ENCODE measurements at regions of chr1 and their contacts with region 1.

Region 1: DNA sequence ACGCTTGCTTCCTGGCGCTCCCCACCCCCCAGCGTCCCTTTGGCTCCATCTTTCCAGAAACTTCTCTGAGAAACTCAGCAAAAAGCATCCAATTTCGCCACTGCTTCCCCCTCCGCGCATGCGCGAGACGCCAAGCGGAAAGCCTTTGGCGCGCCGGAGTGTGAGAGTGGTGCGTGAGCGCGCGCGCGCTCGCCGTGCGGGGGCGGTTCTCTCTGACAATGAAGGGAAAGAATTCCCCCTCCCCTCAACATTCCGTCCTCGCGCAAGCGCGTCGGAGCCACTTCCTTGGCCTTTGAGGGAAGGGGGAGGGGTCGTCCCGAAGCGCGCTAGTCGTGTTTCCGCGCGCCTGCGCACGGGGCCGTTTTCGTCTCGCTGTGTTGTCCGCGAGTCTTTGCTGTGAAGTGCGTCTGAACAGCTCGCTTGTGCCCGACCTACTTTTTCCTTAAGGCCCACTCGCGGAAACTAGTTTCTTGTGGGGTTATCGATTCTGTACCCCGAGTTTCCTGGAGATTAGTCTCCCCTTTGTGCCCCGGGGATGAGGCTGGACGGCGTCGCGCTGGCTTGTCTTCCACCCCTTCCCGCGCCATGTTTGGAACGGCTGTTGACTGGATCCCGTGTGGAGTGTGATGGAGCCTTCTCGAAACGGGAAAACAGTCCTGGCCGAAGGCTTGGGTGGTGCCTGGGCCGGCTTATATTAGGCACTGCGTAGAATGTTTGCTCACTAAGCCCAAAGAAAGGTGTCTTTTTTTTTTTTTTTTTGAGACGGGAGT is 11.6 kb upstream of the SPEN start:
- DNase-seq: peak; percentile 96 to 99 (median 98)
- ATAC-seq: peak; percentile 77
- H3K4me3 ChIP-seq: peak overlapping the region; percentile 100
- H3K4me3 Mint-ChIP-seq: peak overlapping the region; percentile 88 to 100 (median 96)
- H3K27ac ChIP-seq: peak overlapping the region; percentile 98
- H3K27ac Mint-ChIP-seq: peak overlapping the region; percentile 98 to 100 (median 99)
- H3K4me1 ChIP-seq: peaks cover 12 to 16% of the 10 kb centered on the region in 2 donors
- H3K4me1 Mint-ChIP-seq: peaks cover 5 to 35% (median 24%) of the 10 kb centered on the region in 7 donors
- H3K27me3 ChIP-seq: no peaks in the 10 kb centered on the region
- H3K27me3 Mint-ChIP-seq: peaks cover 0 to 3% (median 0%) of the 10 kb centered on the region in 5 donors

Region 2: DNA sequence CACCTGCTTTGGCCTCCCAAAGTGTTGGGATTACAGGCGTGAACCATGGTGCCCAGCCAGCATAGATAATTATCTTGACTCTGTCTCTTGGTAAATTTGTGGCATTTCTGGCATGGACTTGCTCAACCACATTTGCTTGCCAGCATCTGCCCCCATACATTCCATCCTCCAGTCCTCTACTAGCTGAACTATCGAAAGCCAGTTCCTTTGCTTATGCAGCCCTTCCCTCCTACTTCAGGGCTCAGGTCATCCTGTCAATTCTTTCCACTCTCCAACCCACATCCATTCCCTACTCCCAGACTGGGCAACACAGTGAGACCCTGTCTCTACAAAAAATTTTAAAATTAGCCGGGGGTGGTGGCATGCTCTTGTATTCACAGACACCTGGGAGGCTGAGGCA is 15.4 kb before region 1 on chr1:
- CTCF ChIA-PET with region 1: interaction called, 14 read pairs
- POLR2A ChIA-PET with region 1: interaction called, 39 read pairs
- intact Hi-C with region 1: loop called (anchors 1 kb)
- DNase-seq: no peak
- ATAC-seq: no peak
- H3K4me3 ChIP-seq: no peak overlapping the region
- H3K4me3 Mint-ChIP-seq: no peak overlapping the region
- H3K27ac ChIP-seq: no peak overlapping the region
- H3K27ac Mint-ChIP-seq: no peak overlapping the region
- H3K4me1 ChIP-seq: no peaks in the 10 kb centered on the region
- H3K4me1 Mint-ChIP-seq: peaks cover 3 to 14% (median 4%) of the 10 kb centered on the region in 7 donors
- H3K27me3 ChIP-seq: no peaks in the 10 kb centered on the region
- H3K27me3 Mint-ChIP-seq: no peaks in the 10 kb centered on the region

Region 3: GRCh38 chr1:15847100-15847892 is 11.4 kb after region 1 on chr1 and contains the start of gene SPEN:
- CTCF ChIA-PET with region 1: interaction called, 9 read pairs
- POLR2A ChIA-PET with region 1: interaction called, 227 read pairs
- intact Hi-C with region 1: loop called (anchors 1 kb)
- DNase-seq: peak; percentile 97 to 99 (median 99)
- ATAC-seq: peak; percentile 91
- H3K4me3 ChIP-seq: peak within 1 kb of the TSS; percentile 74
- H3K4me3 Mint-ChIP-seq: peak within 1 kb of the TSS; percentile 93 to 99 (median 98)
- H3K27ac ChIP-seq: peak within 1 kb of the TSS; percentile 90
- H3K27ac Mint-ChIP-seq: peak within 1 kb of the TSS; percentile 93 to 98 (median 97)
- H3K4me1 ChIP-seq: peaks cover 20 to 26% of the 10 kb centered on the region in 2 donors
- H3K4me1 Mint-ChIP-seq: peaks cover 21 to 64% (median 44%) of the 10 kb centered on the region in 7 donors
- H3K27me3 ChIP-seq: no peaks in the 10 kb centered on the region
- H3K27me3 Mint-ChIP-seq: no peaks in the 10 kb centered on the region
- total RNA-seq, gene SPEN: 72.1 to 92.1 (median 82.9) TPM

Region 4: GRCh38 chr1:15975805-15976680 is 140.1 kb after region 1 on chr1 and contains the start of gene ZBTB17:
- CTCF ChIA-PET with region 1: interaction called, 5 read pairs
- POLR2A ChIA-PET with region 1: interaction called, 20 read pairs
- intact Hi-C with region 1: loop called (anchors 1 kb)
- DNase-seq: peak; percentile 90 to 95 (median 94)
- ATAC-seq: peak; percentile 96
- H3K4me3 ChIP-seq: peak within 1 kb of the TSS; percentile 76
- H3K4me3 Mint-ChIP-seq: peak within 1 kb of the TSS; percentile 82 to 94 (median 90)
- H3K27ac ChIP-seq: peak within 1 kb of the TSS; percentile 83
- H3K27ac Mint-ChIP-seq: peak within 1 kb of the TSS; percentile 82 to 95 (median 92)
- H3K4me1 ChIP-seq: peaks cover 12 to 17% of the 10 kb centered on the region in 2 donors
- H3K4me1 Mint-ChIP-seq: peaks cover 21 to 46% (median 38%) of the 10 kb centered on the region in 7 donors
- H3K27me3 ChIP-seq: no peaks in the 10 kb centered on the region
- H3K27me3 Mint-ChIP-seq: no peaks in the 10 kb centered on the region
- total RNA-seq, gene ZBTB17: 47.3 to 85.1 (median 65.0) TPM

Region 5: DNA sequence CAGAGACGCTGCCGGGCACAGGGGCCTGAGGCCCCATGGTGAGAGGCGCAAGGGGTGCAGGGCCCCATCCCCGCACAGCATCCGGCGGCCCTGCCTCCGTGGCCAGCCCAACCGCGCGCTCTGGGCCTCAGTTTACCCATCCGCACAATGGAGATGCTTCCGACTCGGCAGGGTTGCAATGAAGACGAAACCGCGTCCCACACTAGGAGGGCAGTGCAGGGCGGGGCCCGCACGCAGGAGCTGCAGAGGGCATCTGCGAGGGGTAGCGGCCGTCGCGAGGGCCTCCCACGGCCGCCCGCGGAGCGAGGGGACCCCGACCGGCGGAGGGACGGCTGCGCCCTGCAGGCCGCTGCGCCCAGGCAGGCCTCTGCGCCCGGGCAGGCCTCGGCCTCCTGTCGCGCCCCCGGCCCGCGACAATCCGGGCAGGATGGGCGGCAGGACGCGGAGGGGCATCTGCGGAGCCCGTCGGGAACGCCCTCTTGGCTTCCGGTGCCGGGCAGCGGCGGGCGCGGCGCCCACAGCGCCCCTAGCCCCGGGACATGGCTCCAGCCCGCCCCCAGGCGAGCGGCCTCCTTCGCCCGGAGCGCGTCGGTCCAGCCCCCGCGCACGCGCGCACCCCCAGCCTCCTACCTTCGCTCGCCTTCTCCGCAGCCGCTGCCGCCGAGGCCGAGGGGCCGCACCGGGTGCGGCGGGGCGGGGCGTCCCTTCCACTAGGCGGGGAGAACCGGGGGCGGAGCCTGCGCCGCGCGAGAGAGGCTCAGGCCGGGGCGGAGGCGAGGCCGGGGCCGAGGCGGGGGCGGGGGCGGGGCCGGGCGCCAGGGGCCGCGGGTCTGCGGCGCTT is 662.9 kb after region 1 on chr1:
- CTCF ChIA-PET with region 1: no interaction called
- POLR2A ChIA-PET with region 1: no interaction called
- intact Hi-C with region 1: loop called in 1 of 2 experiments (anchors 5 kb)
- DNase-seq: peak; percentile 64 to 91 (median 74)
- ATAC-seq: peak; percentile 94
- H3K4me3 ChIP-seq: peak overlapping the region; percentile 83
- H3K4me3 Mint-ChIP-seq: peak overlapping the region; percentile 83 to 95 (median 88)
- H3K27ac ChIP-seq: peak overlapping the region; percentile 56
- H3K27ac Mint-ChIP-seq: peak overlapping the region in 6 of 9 donors; percentile 38 to 85 (median 78)
- H3K4me1 ChIP-seq: no peaks in the 10 kb centered on the region
- H3K4me1 Mint-ChIP-seq: peaks cover 9 to 27% (median 20%) of the 10 kb centered on the region in 7 donors
- H3K27me3 ChIP-seq: no peaks in the 10 kb centered on the region
- H3K27me3 Mint-ChIP-seq: peaks cover 0 to 9% (median 0%) of the 10 kb centered on the region in 5 donors